ENCODE measurements at regions of chr9 and their contacts with region 1.

Region 1: DNA sequence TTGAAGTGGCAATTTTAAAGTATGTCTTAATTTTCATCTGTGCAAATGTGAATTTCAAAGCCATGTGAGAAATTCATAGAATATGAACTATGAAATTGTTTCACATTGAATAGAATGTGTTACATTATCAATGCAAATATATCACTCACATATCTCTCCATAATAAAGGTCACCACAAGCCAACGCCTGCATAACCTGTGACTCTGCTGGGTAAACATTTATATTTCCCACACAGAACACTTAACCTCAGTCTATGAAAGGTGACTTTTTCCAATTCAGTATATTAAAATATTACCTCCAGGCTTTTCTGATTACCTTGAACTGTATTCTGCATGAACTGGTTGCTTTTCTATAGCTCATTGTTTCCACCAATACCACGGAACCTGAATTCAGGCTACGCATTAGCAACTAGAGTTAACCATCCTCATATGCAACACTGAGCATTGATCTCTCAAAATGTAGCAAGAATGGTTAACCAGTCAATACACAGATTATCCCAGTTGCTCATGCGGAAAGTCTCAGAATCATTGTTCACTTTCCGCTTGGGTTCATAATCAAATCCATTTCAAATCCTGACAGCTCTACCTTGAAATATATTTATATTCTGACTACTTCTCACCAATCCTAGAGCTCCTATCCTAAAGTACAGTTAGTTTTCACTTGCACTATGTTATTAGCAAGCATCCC is 126.6 kb upstream of the TYRP1 start:
- DNase-seq: no peak
- H3K4me3 ChIP-seq: no peak overlapping the region
- H3K27ac ChIP-seq: no peak overlapping the region
- H3K4me1 ChIP-seq: no peaks in the 10 kb centered on the region
- H3K27me3 ChIP-seq: peaks cover 8% of the 10 kb centered on the region
- CTCF ChIP-seq: no peak

Region 2: DNA sequence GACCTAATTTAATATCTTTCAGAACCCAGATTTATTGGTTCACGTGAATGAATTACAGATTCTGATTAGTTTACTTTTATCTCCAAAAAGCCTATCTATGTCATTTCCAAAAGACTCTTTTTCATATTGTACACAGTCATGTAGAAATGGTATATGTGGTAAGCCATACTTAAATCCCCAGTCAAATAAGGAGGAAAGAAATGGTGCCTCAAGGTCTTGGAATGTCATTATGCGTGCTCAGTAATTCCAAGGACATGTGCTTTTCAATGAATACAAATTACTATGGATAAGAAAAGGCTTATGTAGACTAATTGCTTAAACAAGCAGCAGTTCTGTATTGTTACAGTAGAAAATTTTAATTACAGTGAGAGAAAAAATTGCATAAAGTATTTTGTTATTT is 62.5 kb after region 1 on chr9:
- CTCF ChIA-PET with region 1: no interaction called
- POLR2A ChIA-PET with region 1: no interaction called
- intact Hi-C with region 1: loop called (anchors 5 kb)
- DNase-seq: no peak
- H3K4me3 ChIP-seq: no peak overlapping the region
- H3K27ac ChIP-seq: no peak overlapping the region
- H3K4me1 ChIP-seq: no peaks in the 10 kb centered on the region
- H3K27me3 ChIP-seq: no peaks in the 10 kb centered on the region
- CTCF ChIP-seq: no peak